Activated T-helper 1 cell treated with anti-CD3 and anti-CD28 coated beads, Interleukin-12 subunit alpha, Interleukin-12 subunit beta, Interleukin-2, Interleukin-4 antibody, amounts not matched to agents 30 ng/mL and 10 ng/mL and 1 ng/mL, durations not matched to agents 14 hours and 24 hours and 36 hours (primary cell): ENCODE measurements at regions of chr17 and their contacts with region 1.

Region 1: DNA sequence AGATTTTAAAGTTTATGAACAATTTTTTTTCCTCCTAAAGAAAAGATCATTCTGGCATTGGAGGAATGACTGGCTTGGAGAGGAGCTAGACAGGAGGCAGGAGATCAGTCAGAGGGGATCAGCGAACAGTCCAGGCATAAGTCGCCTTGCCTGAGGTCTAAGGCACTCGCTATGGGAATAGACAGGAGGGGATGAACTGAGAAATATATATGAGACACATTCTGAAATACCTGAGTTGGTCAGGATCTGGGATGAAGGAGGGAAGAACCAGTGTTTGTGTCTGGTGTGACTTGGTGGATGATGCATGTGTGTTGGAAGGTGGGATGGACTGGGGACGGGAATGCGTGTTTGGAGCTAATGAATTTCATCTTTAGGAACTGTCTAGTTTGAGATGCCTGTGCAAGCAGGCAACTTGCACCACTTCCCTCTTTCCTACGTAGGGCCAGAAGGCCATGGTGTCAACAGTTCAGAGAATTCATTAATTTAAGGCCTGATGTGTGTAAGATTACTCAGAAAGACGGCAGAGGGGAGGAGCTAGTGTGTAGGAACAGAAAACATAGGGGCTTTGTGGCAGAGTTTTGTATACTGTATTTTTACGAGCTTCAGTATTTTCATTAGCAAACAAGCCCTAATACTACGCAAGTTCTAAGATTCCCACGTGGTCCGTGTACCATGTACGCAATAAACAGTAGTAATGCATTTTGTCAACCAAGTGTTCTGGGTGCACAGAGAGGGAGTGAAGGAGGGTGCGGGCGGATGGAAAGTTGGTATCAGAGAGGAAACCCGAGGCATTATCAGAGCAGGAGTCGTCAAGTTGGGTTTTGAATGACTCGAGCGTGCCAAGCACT is 825 bp downstream of the HEATR6 start:
- DNase-seq: no peak
- H3K4me3 Mint-ChIP-seq: peak overlapping the region; percentile 93
- H3K27ac Mint-ChIP-seq: peak overlapping the region; percentile 100
- H3K4me1 Mint-ChIP-seq: peaks cover 24% of the 10 kb centered on the region
- H3K27me3 Mint-ChIP-seq: no peaks in the 10 kb centered on the region

Region 2: GRCh38 chr17:60135151-60135950 is 57.5 kb after region 1 on chr17:
- intact Hi-C with region 1: loop called (anchors 10 kb)
- DNase-seq: peak; percentile 86
- H3K4me3 Mint-ChIP-seq: peak overlapping the region; percentile 91
- H3K27ac Mint-ChIP-seq: peak overlapping the region; percentile 87
- H3K4me1 Mint-ChIP-seq: peaks cover 29% of the 10 kb centered on the region
- H3K27me3 Mint-ChIP-seq: peaks cover 27% of the 10 kb centered on the region

Region 3: DNA sequence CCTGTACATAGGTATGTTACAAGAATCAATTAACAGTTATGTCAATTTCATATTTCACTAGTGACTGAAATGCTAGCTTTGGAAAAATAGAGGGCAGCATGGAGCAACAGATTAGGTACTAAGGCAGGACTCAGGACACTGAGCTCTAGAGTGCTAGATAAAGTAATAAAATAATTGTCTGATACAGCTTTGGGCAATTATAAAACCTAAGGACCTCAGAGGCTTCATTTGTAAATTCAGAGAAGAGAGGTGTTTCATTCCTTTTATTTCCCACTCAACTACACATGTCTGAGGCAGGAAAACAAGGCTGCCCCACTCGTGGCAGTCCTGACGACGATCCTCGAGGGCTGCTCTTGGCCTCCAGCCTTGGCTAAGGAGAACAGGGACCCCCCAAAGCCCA is 153.3 kb after region 1 on chr17:
- intact Hi-C with region 1: no loop called
- DNase-seq: no peak
- H3K4me3 Mint-ChIP-seq: no peak overlapping the region
- H3K27ac Mint-ChIP-seq: no peak overlapping the region
- H3K4me1 Mint-ChIP-seq: no peaks in the 10 kb centered on the region
- H3K27me3 Mint-ChIP-seq: no peaks in the 10 kb centered on the region

Region 4: GRCh38 chr17:61862975-61863800 is 1785.3 kb after region 1 on chr17 and contains the start of gene BRIP1:
- intact Hi-C with region 1: loop called (anchors 5 kb)
- DNase-seq: peak; percentile 86
- H3K4me3 Mint-ChIP-seq: peak within 1 kb of the TSS; percentile 91
- H3K27ac Mint-ChIP-seq: peak within 1 kb of the TSS; percentile 89
- H3K4me1 Mint-ChIP-seq: peaks cover 44% of the 10 kb centered on the region
- H3K27me3 Mint-ChIP-seq: no peaks in the 10 kb centered on the region
- total RNA-seq, gene BRIP1: 17.9 and 18.2 TPM in 2 replicates